ENCODE measurements at regions of chr6 and their contacts with region 1.

Region 1: DNA sequence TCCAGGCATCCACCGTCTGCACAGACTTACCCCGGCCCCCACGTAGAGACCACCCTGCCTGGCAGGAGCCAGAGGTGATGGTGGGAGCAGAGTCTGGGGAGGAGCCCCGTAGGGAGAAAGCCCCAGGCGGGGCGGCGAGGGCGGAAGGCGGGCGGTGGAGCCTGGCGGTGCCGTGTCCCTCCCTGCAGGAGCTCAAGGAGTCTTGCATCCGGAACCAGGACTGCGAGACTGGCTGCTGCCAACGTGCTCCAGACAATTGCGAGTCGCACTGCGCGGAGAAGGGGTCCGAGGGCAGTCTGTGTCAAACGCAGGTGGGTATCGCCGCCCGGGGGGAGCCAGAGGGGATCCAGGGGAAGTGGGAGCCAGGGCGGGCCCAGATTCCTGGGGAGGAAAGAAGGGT is 6.0 kb downstream of the CLPSL1 start:
- DNase-seq: no peak
- H3K4me3 ChIP-seq: no peak overlapping the region
- H3K4me3 Mint-ChIP-seq: no peak overlapping the region
- H3K27ac ChIP-seq: no peak overlapping the region
- H3K27ac Mint-ChIP-seq: no peak overlapping the region
- H3K4me1 ChIP-seq: no peaks in the 10 kb centered on the region
- H3K4me1 Mint-ChIP-seq: no peaks in the 10 kb centered on the region
- H3K27me3 ChIP-seq: peaks cover 8% of the 10 kb centered on the region
- H3K27me3 Mint-ChIP-seq: peaks cover 41 to 50% of the 10 kb centered on the region in 2 donors

Region 2: GRCh38 chr6:35402136-35402855 is 384.5 kb before region 1 on chr6:
- CTCF ChIA-PET with region 1: no interaction called
- POLR2A ChIA-PET with region 1: no interaction called
- intact Hi-C with region 1: no loop called
- DNase-seq: no peak
- H3K4me3 ChIP-seq: no peak overlapping the region
- H3K4me3 Mint-ChIP-seq: no peak overlapping the region
- H3K27ac ChIP-seq: no peak overlapping the region
- H3K27ac Mint-ChIP-seq: peak overlapping the region; percentile 5 to 76 (median 57)
- H3K4me1 ChIP-seq: no peaks in the 10 kb centered on the region
- H3K4me1 Mint-ChIP-seq: peaks cover 14 to 47% (median 18%) of the 10 kb centered on the region in 4 donors
- H3K27me3 ChIP-seq: no peaks in the 10 kb centered on the region
- H3K27me3 Mint-ChIP-seq: no peaks in the 10 kb centered on the region

Region 3: GRCh38 chr6:35583893-35584688 is 202.7 kb before region 1 on chr6:
- CTCF ChIA-PET with region 1: no interaction called
- POLR2A ChIA-PET with region 1: no interaction called
- intact Hi-C with region 1: no loop called
- DNase-seq: peak; percentile 73 to 78 (median 76)
- H3K4me3 ChIP-seq: no peak overlapping the region
- H3K4me3 Mint-ChIP-seq: peak overlapping the region in 5 of 8 donors; percentile 17 to 63 (median 46)
- H3K27ac ChIP-seq: peak overlapping the region; percentile 12
- H3K27ac Mint-ChIP-seq: peak overlapping the region; percentile 39 to 89 (median 83)
- H3K4me1 ChIP-seq: peaks cover 45% of the 10 kb centered on the region
- H3K4me1 Mint-ChIP-seq: peaks cover 47 to 59% (median 50%) of the 10 kb centered on the region in 4 donors
- H3K27me3 ChIP-seq: no peaks in the 10 kb centered on the region
- H3K27me3 Mint-ChIP-seq: no peaks in the 10 kb centered on the region

Region 4: GRCh38 chr6:35650015-35650414 is 136.8 kb before region 1 on chr6:
- CTCF ChIA-PET with region 1: no interaction called
- POLR2A ChIA-PET with region 1: no interaction called
- intact Hi-C with region 1: no loop called
- DNase-seq: no peak
- H3K4me3 ChIP-seq: no peak overlapping the region
- H3K4me3 Mint-ChIP-seq: no peak overlapping the region
- H3K27ac ChIP-seq: no peak overlapping the region
- H3K27ac Mint-ChIP-seq: no peak overlapping the region
- H3K4me1 ChIP-seq: peaks cover 50% of the 10 kb centered on the region
- H3K4me1 Mint-ChIP-seq: peaks cover 35 to 67% (median 51%) of the 10 kb centered on the region in 4 donors
- H3K27me3 ChIP-seq: no peaks in the 10 kb centered on the region
- H3K27me3 Mint-ChIP-seq: no peaks in the 10 kb centered on the region

Region 5: DNA sequence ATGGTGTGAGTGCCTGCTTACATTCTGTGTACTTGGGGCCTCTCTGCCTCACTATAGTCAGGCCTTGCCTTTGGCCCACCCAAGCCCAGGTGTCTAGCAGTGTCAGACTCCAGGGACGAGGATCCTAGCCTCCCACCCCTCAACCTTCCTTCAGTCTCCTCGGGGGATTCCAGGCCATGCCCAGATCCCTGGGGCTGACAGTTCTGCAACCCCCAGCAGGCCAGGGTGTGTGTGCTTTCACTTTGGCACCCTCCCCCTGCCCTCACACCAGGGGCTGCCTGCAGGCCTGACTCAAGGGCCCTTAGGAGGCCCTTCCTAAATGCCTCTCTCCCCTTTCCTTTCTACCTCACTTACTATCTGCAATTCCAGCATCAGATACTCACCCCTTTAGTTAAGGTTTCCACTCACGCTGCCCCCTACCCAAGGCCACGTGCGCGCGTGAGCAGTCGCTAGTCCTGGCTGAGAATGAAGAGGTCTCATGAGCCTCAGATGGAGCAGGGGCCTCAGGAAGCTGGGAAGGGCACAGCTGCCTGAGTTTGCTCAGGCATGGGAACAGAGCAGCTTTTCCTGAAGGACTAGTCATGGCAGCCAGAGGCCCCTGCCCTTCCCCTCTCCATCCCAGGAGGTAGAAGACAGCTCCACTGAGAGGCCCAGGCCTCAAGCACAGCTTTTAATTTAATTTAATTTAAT is 11.2 kb after region 1 on chr6:
- CTCF ChIA-PET with region 1: interaction called, 5 read pairs
- POLR2A ChIA-PET with region 1: interaction called, 11 read pairs
- intact Hi-C with region 1: no loop called
- DNase-seq: no peak
- H3K4me3 ChIP-seq: no peak overlapping the region
- H3K4me3 Mint-ChIP-seq: no peak overlapping the region
- H3K27ac ChIP-seq: no peak overlapping the region
- H3K27ac Mint-ChIP-seq: no peak overlapping the region
- H3K4me1 ChIP-seq: no peaks in the 10 kb centered on the region
- H3K4me1 Mint-ChIP-seq: no peaks in the 10 kb centered on the region
- H3K27me3 ChIP-seq: no peaks in the 10 kb centered on the region
- H3K27me3 Mint-ChIP-seq: peaks cover 1% of the 10 kb centered on the region in 2 donors